Breast epithelium (tissue), 4 donors: ENCODE measurements at regions of chr5 and their contacts with region 1.

Region 1: GRCh38 chr5:149442563-149443182 is 63.6 kb upstream of the IL17B start:
- DNase-seq: peak; percentile 84 to 90
- H3K4me3 ChIP-seq: no peak overlapping the region
- H3K27ac ChIP-seq: peak overlapping the region; percentile 87 to 92
- H3K4me1 ChIP-seq: peaks cover 0 to 15% of the 10 kb centered on the region in 2 donors
- H3K27me3 ChIP-seq: no peaks in the 10 kb centered on the region
- CTCF ChIP-seq: peak; percentile 95 to 97 (median 96)
- POLR2A ChIP-seq: no peak

Region 2: DNA sequence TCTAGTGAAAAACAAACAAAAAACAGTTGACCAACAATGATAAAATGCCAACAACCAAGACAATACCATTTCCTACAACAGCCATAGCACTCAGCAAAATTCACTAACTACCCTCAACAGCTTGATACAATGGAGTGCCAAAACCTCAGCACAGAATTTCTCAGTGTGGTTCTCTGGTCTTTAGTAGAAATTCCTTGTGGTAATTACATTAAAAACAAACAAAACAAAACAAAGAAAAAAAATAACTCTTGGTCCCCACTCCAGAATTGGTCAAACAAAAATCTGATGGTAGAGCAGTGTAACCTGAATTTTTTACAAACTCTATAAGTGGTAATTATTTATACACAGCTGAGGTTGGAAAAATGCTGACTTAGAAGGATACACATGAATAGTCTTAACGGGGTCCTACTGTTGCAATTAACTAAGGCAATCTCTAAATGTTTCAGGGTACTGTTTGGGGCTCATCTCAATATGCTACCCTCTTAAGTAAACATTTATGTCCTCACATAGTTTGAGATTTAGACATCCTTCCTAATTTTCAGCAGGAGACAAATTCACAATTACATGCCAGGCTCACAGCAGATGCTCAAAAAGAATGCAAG is 94.8 kb after region 1 on chr5:
- intact Hi-C with region 1: no loop called
- DNase-seq: no peak
- H3K4me3 ChIP-seq: no peak overlapping the region
- H3K27ac ChIP-seq: peak overlapping the region in 1 of 2 donors; percentile 15
- H3K4me1 ChIP-seq: peaks cover 0 to 12% of the 10 kb centered on the region in 2 donors
- H3K27me3 ChIP-seq: no peaks in the 10 kb centered on the region
- CTCF ChIP-seq: no peak
- POLR2A ChIP-seq: no peak

Region 3: DNA sequence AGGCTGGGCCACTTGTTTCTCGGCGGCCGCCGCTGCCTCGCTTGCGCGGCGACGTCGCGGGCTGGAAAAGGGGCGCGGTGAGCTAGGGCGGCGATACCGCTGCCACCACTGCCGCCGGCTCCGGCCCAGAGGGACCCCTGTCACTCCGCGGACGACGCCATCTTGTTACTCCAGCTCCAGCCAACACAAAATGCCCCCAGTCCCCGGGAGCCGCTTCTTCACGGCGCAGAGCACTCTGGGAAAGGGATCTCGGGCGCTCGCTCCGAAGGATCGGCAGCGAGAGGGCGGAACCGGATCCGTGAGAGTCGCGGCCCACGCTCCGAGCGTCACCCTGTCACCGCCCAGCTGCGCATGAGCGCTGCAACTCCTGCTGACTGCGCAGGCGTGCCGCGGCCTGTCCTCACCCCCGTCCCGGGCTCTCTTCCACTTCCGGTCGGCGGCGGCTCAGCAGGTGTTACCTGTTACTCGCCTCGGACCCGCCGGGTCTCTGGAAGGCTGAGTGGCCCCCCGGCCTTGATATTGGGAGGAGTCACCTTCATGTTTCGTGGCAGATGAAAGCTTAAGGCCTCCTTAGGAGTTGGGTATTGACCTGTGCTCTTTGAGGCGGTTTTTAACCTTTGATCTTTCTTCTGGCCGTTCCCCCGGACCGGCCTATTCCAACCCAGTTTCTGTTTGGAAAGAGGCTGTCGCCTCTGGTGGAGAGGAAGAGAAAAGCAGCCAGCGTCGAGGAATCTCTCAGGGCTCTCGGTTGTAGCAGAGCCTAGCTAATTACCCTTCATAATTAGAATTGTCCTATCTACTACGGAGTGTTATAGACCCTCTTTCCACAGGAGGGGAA is 108.7 kb after region 1 on chr5 and contains the start of gene CSNK1A1:
- intact Hi-C with region 1: loop called (anchors 2 kb)
- DNase-seq: peak; percentile 98
- H3K4me3 ChIP-seq: peak within 1 kb of the TSS; percentile 62 to 99 (median 87)
- H3K27ac ChIP-seq: peak within 1 kb of the TSS; percentile 97 to 99
- H3K4me1 ChIP-seq: no peaks in the 10 kb centered on the region
- H3K27me3 ChIP-seq: no peaks in the 10 kb centered on the region
- CTCF ChIP-seq: peak; percentile 95 to 99 (median 96)
- POLR2A ChIP-seq: peak; percentile 89
- total RNA-seq, gene CSNK1A1: 151 to 350 (median 287) TPM

Region 4: DNA sequence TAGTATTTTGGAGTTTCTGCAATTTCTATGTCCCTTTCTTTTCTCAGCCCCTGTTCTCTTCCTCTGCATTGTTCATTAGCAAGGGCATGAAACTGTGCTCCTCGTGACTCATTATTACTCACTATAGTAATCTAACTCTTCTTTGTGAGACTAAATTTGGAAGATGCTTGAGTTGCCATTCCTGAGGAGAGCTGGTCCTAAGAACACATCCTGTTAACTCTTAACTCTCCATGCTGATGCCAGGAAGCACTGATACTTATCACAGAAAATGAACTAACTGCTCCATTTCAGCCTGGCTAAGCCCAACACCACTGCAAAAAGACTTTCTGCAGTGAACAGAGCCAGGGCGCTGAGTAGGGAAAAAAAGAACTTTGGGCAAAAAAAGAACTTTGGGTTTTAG is 119.2 kb after region 1 on chr5:
- intact Hi-C with region 1: loop called (anchors 5 kb)
- DNase-seq: no peak
- H3K4me3 ChIP-seq: no peak overlapping the region
- H3K27ac ChIP-seq: peak overlapping the region; percentile 81 to 82
- H3K4me1 ChIP-seq: peaks cover 3 to 8% of the 10 kb centered on the region in 2 donors
- H3K27me3 ChIP-seq: no peaks in the 10 kb centered on the region
- CTCF ChIP-seq: no peak
- POLR2A ChIP-seq: no peak